Motor neuron (in vitro differentiated cells): ENCODE measurements at regions of chr16 and their contacts with region 1.

Region 1: GRCh38 chr16:48687421-48688038 is 77.5 kb upstream of the N4BP1 start:
- ATAC-seq: peak; percentile 86 to 98 (median 92)
- H3K4me3 ChIP-seq: no peak overlapping the region
- H3K27ac ChIP-seq: no peak overlapping the region
- H3K4me1 ChIP-seq: no peaks in the 10 kb centered on the region

Region 2: DNA sequence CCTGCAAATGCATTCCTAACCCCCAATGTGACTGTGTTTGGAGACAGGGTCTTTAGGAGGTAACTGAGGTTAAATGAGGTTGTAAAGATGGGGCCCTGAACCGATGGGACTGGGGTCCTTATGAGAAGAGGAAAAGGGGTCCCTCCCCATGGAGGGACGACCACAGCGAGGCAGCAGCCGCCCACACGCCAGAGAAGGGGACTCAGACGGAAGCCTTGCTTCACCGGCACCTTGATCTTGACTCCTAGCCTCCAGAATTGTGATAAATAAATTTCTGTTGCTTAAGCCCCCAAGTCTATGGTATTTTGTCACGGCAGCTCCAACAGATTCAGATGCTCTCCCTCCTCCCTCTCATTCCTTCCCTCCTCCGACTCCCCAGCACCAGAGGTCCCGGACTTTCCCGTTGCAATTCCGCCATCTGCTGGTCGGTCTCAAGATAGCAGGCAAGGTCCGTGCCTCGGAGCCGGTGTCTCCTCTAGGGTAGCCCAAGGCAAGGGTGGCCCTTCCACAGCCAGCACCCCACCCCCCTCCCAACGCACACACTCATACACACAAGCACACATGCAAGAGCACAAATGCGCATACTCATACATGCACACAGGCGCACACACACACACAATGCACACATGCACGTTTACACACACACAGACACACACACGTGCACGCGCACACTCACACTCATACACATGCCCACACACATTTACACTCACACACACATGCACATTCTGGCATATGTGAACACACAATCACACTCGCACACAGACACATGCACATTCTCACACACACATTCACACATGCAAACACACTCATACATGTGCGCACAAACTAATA is 663.0 kb after region 1 on chr16:
- in situ Hi-C with region 1: loop called in 8 of 9 experiments (anchors 10 to 25 kb)
- ATAC-seq: peak; percentile 26 to 85 (median 64)
- H3K4me3 ChIP-seq: no peak overlapping the region
- H3K27ac ChIP-seq: no peak overlapping the region
- H3K4me1 ChIP-seq: no peaks in the 10 kb centered on the region